ENCODE measurements at regions of chr6 and their contacts with region 1.

Region 1: GRCh38 chr6:157034436-157035230 is 257.5 kb downstream of the ARID1B start:
- DNase-seq: no peak
- ATAC-seq: peak; percentile 45 to 46

Region 2: GRCh38 chr6:156651486-156651885 is 383.1 kb before region 1 on chr6:
- intact Hi-C with region 1: no loop called
- DNase-seq: no peak
- ATAC-seq: no peak

Region 3: GRCh38 chr6:157184202-157185020 is 149.8 kb after region 1 on chr6:
- intact Hi-C with region 1: loop called (anchors 1 to 10 kb)
- DNase-seq: peak; percentile 75
- ATAC-seq: peak; percentile 86 to 87

Region 4: DNA sequence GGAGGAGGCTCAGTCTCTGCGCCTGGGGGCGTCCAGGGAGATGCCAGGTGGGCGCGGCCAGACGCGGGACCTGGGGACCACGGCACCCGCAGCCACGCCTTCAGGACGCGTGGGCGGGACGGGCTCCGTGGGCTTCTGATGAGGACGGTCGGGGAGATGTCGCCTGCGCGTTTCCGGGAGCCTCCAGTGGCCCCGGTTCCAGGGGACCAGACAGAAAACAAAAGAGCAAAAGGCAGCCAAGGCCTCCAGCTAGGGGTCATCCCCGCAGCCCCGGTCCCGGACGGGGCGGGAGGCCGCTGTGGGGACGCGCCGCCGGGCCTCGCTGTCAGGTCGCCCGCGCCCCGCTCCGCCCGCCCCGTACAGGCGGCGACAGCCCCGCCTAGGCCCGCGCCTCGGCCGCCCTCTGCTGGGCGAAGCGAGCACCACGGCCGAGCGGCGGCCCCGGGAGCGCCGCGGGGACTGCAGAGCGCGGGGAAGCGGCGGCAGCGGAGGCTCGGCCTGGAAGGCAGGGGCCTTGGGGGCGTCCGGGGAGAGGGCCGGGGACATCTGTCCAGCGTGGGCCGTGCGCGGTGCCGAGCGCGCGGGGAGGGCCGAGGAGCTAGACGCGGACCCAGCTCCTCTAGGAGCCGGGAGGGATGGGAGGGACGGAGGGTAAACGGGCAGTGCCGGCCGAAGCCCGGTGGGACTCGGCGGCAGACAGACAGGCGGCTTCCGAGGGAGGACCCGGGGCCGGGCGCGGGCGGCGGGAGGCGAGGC is 240.0 kb after region 1 on chr6:
- intact Hi-C with region 1: loop called (anchors 10 kb)
- DNase-seq: peak; percentile 81
- ATAC-seq: peak; percentile 95 to 96